Heart left ventricle (tissue), 16 donors: ENCODE measurements at regions of chr19 and their contacts with region 1.

Region 1: DNA sequence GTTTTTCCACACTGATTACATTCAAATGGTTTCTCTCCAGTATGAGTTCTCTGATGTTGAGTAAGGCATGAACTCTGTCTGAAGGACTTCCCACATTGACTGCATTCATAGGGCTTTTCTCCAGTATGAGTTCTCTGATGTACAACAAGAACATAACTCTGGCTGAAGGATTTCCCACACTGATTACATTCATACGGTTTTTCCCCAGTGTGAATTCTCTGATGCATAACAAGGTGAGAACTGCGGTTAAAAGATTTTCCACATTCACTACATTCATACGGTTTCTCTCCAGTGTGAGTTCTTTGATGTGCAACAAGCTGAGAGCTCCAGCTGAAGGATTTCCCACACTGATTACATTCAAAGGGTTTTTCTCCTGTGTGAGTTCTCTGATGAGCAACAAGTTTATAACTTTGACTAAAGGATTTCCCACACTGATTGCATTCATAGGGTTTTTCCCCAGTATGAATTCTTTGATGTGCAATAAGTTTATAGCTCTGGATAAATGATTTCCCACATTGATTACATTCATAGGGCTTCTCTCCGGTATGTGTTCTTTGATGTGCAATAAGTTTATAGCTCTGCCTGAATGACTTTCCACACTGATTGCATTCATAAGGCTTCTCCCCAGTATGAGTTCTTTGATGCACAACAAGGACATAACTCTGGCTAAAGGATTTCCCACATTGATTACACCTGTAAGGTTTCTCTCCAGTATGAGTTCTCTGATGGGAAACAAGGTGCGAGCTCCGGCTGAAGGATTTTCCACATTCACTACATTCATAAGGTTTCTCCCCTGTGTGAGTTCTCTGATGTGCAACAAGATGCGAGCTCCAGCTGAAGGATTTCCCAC is 23.5 kb downstream of the ZNF180 start:
- DNase-seq: no peak
- ATAC-seq: no peak
- H3K4me3 ChIP-seq: no peak overlapping the region
- H3K27ac ChIP-seq: no peak overlapping the region
- H3K4me1 ChIP-seq: no peaks in the 10 kb centered on the region
- H3K27me3 ChIP-seq: no peaks in the 10 kb centered on the region
- CTCF ChIP-seq: no peak
- POLR2A ChIP-seq: no peak

Region 2: DNA sequence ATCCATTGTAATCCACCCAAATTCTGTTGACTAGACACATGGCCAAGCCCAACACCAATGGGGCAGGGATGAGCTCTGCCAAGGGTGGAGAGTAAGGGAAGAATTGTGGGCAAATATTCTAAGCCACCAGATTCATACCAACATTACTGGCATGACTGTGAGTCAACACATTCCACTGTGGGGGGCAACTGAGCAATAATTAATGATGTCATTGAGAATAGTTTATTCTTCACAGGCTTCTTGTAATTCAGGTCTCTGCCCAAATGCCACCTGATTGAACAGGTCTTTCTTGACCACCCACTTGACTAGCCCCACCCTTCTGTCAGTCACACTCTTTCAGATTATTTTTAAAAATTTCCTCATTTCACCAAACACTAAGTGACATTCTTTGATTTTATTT is 621.2 kb before region 1 on chr19:
- intact Hi-C with region 1: loop called in 1 of 10 experiments (anchors 10 kb)
- DNase-seq: no peak
- ATAC-seq: no peak
- H3K4me3 ChIP-seq: no peak overlapping the region
- H3K27ac ChIP-seq: no peak overlapping the region
- H3K4me1 ChIP-seq: no peaks in the 10 kb centered on the region
- H3K27me3 ChIP-seq: no peaks in the 10 kb centered on the region
- CTCF ChIP-seq: no peak
- POLR2A ChIP-seq: no peak

Region 3: GRCh38 chr19:44430956-44431355 is 45.8 kb before region 1 on chr19:
- intact Hi-C with region 1: no loop called
- DNase-seq: no peak
- ATAC-seq: no peak
- H3K4me3 ChIP-seq: no peak overlapping the region
- H3K27ac ChIP-seq: no peak overlapping the region
- H3K4me1 ChIP-seq: no peaks in the 10 kb centered on the region
- H3K27me3 ChIP-seq: no peaks in the 10 kb centered on the region
- CTCF ChIP-seq: no peak
- POLR2A ChIP-seq: no peak

Region 4: GRCh38 chr19:44539236-44539826 is 62.5 kb after region 1 on chr19:
- intact Hi-C with region 1: no loop called
- DNase-seq: no peak
- ATAC-seq: no peak
- H3K4me3 ChIP-seq: no peak overlapping the region
- H3K27ac ChIP-seq: no peak overlapping the region
- H3K4me1 ChIP-seq: no peaks in the 10 kb centered on the region
- H3K27me3 ChIP-seq: peaks cover 0 to 11% (median 0%) of the 10 kb centered on the region in 9 donors
- CTCF ChIP-seq: no peak
- POLR2A ChIP-seq: no peak

Region 5: GRCh38 chr19:44734986-44735385 is 258.2 kb after region 1 on chr19:
- intact Hi-C with region 1: no loop called
- DNase-seq: no peak
- ATAC-seq: no peak
- H3K4me3 ChIP-seq: no peak overlapping the region
- H3K27ac ChIP-seq: no peak overlapping the region
- H3K4me1 ChIP-seq: peaks cover 0 to 35% (median 0%) of the 10 kb centered on the region in 12 donors
- H3K27me3 ChIP-seq: no peaks in the 10 kb centered on the region
- CTCF ChIP-seq: no peak
- POLR2A ChIP-seq: no peak